ENCODE measurements at regions of chr9 and their contacts with region 1.

Region 1: DNA sequence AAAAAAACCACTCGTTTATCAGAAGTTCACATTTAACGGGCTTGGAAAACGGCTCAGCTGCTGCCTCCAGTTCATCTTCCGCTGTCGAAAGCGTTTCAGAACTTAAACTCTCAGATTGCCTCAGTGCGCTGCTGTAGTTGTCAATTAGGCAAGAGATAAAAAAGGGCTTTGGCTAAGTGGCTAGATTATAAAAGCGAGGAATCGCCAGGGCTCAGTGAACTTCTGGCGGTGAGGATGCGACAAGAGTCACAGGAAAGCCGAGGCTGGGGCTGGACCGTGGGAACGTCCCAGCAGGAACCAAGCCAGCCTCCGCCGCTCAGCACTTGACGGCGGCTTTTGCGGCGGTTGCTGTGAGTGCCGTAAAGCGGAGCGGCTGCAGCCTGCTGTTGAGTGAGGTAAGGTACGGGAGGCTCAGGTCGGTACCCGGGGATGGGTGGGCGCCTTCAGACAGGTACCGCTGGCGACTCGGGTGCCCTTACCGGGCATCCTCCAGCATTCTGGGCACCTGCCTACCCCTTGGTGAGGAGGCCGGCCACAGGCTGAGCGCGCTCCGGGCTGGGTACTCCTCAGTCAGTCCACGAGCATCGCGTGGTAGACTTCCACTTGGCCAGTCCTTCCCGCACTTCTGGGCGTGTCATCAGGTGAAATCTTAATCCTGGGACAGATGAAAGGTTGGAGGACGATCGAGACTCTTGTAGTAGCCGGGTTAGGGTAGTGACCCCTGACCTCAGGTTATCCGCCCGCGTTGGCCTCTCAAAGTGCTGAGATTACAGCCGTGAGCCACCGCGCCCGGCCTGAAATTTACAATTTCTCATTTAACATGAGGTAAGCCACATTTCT is at the start of gene FKTN:
- DNase-seq: peak; percentile 64 to 86 (median 81)
- ATAC-seq: peak; percentile 96
- H3K4me3 ChIP-seq: peak within 1 kb of the TSS; percentile 72 to 93
- H3K4me3 Mint-ChIP-seq: peak within 1 kb of the TSS; percentile 96
- H3K27ac ChIP-seq: peak within 1 kb of the TSS; percentile 45 to 69
- H3K27ac Mint-ChIP-seq: peak within 1 kb of the TSS; percentile 80
- H3K4me1 ChIP-seq: peaks cover 8% of the 10 kb centered on the region
- H3K4me1 Mint-ChIP-seq: peaks cover 19% of the 10 kb centered on the region
- H3K27me3 ChIP-seq: no peaks in the 10 kb centered on the region
- H3K27me3 Mint-ChIP-seq: no peaks in the 10 kb centered on the region
- CTCF ChIP-seq: no peak
- total RNA-seq, gene FKTN: 2.1 to 3.2 TPM

Region 2: GRCh38 chr9:104093647-104094533 is 1464.1 kb before region 1 on chr9 and contains the start of gene SMC2:
- CTCF ChIA-PET with region 1: no interaction called
- POLR2A ChIA-PET with region 1: no interaction called
- intact Hi-C with region 1: loop called in 1 of 2 experiments (anchors 5 kb)
- DNase-seq: peak; percentile 90 to 96 (median 94)
- ATAC-seq: peak; percentile 96
- H3K4me3 ChIP-seq: peak within 1 kb of the TSS; percentile 58 to 79
- H3K4me3 Mint-ChIP-seq: peak within 1 kb of the TSS; percentile 98
- H3K27ac ChIP-seq: peak within 1 kb of the TSS; percentile 78 to 98
- H3K27ac Mint-ChIP-seq: peak within 1 kb of the TSS; percentile 98
- H3K4me1 ChIP-seq: peaks cover 21% of the 10 kb centered on the region
- H3K4me1 Mint-ChIP-seq: peaks cover 44% of the 10 kb centered on the region
- H3K27me3 ChIP-seq: no peaks in the 10 kb centered on the region
- H3K27me3 Mint-ChIP-seq: no peaks in the 10 kb centered on the region
- CTCF ChIP-seq: no peak
- total RNA-seq, gene SMC2: 1.9 to 2.0 TPM

Region 3: GRCh38 chr9:104482921-104483570 is 1074.9 kb before region 1 on chr9:
- CTCF ChIA-PET with region 1: no interaction called
- POLR2A ChIA-PET with region 1: no interaction called
- intact Hi-C with region 1: no loop called
- DNase-seq: no peak
- ATAC-seq: no peak
- H3K4me3 ChIP-seq: no peak overlapping the region
- H3K4me3 Mint-ChIP-seq: no peak overlapping the region
- H3K27ac ChIP-seq: no peak overlapping the region
- H3K27ac Mint-ChIP-seq: no peak overlapping the region
- H3K4me1 ChIP-seq: no peaks in the 10 kb centered on the region
- H3K4me1 Mint-ChIP-seq: no peaks in the 10 kb centered on the region
- H3K27me3 ChIP-seq: no peaks in the 10 kb centered on the region
- H3K27me3 Mint-ChIP-seq: no peaks in the 10 kb centered on the region
- CTCF ChIP-seq: no peak

Region 4: GRCh38 chr9:105447814-105448812 is 109.9 kb before region 1 on chr9 and contains the start of gene FSD1L:
- CTCF ChIA-PET with region 1: no interaction called
- POLR2A ChIA-PET with region 1: no interaction called
- intact Hi-C with region 1: loop called in 1 of 2 experiments (anchors 1 kb)
- DNase-seq: peak; percentile 45 to 89 (median 74)
- ATAC-seq: peak; percentile 90
- H3K4me3 ChIP-seq: peak within 1 kb of the TSS; percentile 62 to 76
- H3K4me3 Mint-ChIP-seq: peak within 1 kb of the TSS; percentile 81
- H3K27ac ChIP-seq: no peak within 1 kb of the TSS
- H3K27ac Mint-ChIP-seq: no peak within 1 kb of the TSS
- H3K4me1 ChIP-seq: no peaks in the 10 kb centered on the region
- H3K4me1 Mint-ChIP-seq: peaks cover 8% of the 10 kb centered on the region
- H3K27me3 ChIP-seq: no peaks in the 10 kb centered on the region
- H3K27me3 Mint-ChIP-seq: no peaks in the 10 kb centered on the region
- CTCF ChIP-seq: no peak
- total RNA-seq, gene FSD1L: 0.24 to 0.33 TPM

Region 5: GRCh38 chr9:105458404-105458803 is 99.6 kb before region 1 on chr9:
- CTCF ChIA-PET with region 1: no interaction called
- POLR2A ChIA-PET with region 1: no interaction called
- intact Hi-C with region 1: no loop called
- DNase-seq: no peak
- ATAC-seq: no peak
- H3K4me3 ChIP-seq: no peak overlapping the region
- H3K4me3 Mint-ChIP-seq: no peak overlapping the region
- H3K27ac ChIP-seq: no peak overlapping the region
- H3K27ac Mint-ChIP-seq: no peak overlapping the region
- H3K4me1 ChIP-seq: no peaks in the 10 kb centered on the region
- H3K4me1 Mint-ChIP-seq: no peaks in the 10 kb centered on the region
- H3K27me3 ChIP-seq: no peaks in the 10 kb centered on the region
- H3K27me3 Mint-ChIP-seq: no peaks in the 10 kb centered on the region
- CTCF ChIP-seq: no peak

Region 6: GRCh38 chr9:105694190-105694847 is 136.3 kb after region 1 on chr9 and contains the start of gene TMEM38B:
- CTCF ChIA-PET with region 1: no interaction called
- POLR2A ChIA-PET with region 1: no interaction called
- intact Hi-C with region 1: loop called (anchors 2 to 5 kb)
- DNase-seq: peak; percentile 54 to 91 (median 73)
- ATAC-seq: peak; percentile 90
- H3K4me3 ChIP-seq: peak within 1 kb of the TSS; percentile 69 to 78
- H3K4me3 Mint-ChIP-seq: peak within 1 kb of the TSS; percentile 90
- H3K27ac ChIP-seq: peak within 1 kb of the TSS; percentile 20 to 58
- H3K27ac Mint-ChIP-seq: peak within 1 kb of the TSS; percentile 73
- H3K4me1 ChIP-seq: peaks cover 15% of the 10 kb centered on the region
- H3K4me1 Mint-ChIP-seq: peaks cover 32% of the 10 kb centered on the region
- H3K27me3 ChIP-seq: peaks cover 0 to 13% of the 10 kb centered on the region in 2 experiments
- H3K27me3 Mint-ChIP-seq: peaks cover 32% of the 10 kb centered on the region
- CTCF ChIP-seq: no peak
- total RNA-seq, gene TMEM38B: 9.5 to 14.1 TPM

Measured in CD8-positive, alpha-beta T cell (primary cell).